ENCODE measurements at regions of chr6 and their contacts with region 1.

Region 1: DNA sequence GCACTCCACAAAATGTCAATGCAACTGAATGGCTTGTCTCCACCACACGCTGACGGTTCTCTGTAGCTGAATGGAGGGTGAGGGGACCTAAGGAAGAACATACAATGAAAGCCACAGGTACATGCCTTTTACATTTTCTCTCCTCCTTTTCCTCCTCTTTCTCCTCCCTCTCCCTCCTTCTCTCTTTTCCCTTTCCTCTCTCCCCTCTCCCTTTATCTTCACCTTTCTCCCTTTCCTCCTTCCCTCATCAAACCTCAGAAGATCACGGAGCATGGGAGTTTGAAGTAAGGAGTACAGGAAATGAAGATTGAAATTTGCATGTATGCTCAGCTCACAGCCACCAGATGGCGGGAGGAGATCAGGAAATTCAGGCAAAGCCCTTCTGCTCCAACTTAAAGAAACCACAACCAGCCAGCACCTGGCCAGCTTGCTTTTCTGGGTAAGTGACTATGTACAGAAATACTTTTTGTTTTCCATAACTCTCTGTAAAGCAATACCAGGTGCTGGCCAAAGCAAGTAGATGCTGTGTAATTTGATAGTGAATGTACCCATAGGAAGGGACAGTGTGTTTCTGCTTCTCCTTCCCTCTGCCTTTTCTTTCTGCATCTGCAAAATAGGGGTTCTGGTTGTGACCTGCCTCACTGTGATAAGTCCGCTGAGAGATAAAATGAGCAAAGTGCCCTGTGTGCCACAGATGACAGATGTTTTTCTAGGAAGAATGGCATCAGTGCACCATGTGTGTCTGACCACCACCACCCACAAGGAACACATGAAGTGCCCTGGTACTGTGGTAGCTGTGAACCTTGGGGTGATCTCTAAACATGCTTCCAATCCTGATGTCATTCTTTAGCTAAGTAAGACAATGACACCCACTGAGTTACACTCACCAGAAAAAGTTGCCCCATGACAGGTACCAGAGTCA is 18.6 kb upstream of the FOXO3 start:
- DNase-seq: no peak
- H3K4me3 ChIP-seq: no peak overlapping the region
- H3K27ac ChIP-seq: no peak overlapping the region
- H3K4me1 ChIP-seq: peaks cover 4 to 30% (median 23%) of the 10 kb centered on the region in 4 donors
- H3K27me3 ChIP-seq: no peaks in the 10 kb centered on the region
- CTCF ChIP-seq: peak; percentile 82 to 90 (median 89)
- EP300 ChIP-seq: no peak
- POLR2A ChIP-seq: no peak

Region 2: DNA sequence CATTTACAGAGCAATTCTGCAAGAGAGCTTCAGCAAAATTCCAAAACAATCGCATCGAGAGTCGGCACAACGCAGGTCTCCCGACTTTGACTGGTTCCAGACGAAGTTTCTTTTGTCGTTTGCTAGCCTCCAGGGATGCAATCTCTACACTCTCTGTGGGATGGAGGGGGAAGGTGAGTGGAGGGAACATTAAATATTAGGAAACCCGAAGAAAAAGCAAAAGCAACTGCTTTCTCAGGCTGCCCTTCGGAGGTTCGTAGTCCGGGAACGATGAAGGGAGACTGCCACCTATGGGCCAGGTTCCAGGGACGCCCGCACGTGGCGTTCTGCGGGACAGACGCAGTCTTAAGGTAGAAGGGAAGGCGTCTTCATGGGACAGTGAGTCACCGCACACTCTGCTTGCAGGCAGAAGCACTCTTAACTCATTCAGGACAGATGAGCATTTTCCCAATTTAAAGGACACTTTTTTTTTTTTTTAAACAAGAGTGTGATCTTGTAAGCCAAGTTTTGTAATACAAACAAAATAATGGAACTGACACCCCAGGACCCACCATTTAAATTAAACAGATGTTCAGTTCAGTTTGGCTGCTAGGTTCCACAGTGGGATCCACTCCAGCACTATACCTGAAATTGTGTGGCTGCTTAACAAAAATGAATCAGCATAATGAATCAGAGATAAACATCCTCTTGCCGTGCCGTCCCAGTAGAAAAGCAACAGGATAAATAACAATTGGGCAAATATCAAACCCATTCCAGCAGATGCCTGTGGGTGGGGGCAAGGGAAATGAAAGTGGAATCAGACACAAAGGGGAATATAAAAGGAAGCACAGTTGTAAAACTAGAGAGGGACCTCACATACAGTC is 240.3 kb after region 1 on chr6:
- intact Hi-C with region 1: loop called (anchors 2 kb)
- DNase-seq: peak; percentile 96
- H3K4me3 ChIP-seq: peak overlapping the region; percentile 42 to 55 (median 52)
- H3K27ac ChIP-seq: peak overlapping the region; percentile 8 to 70 (median 56)
- H3K4me1 ChIP-seq: peaks cover 6 to 21% (median 19%) of the 10 kb centered on the region in 4 donors
- H3K27me3 ChIP-seq: no peaks in the 10 kb centered on the region
- CTCF ChIP-seq: peak; percentile 69 to 78 (median 77)
- EP300 ChIP-seq: no peak
- POLR2A ChIP-seq: no peak

Region 3: DNA sequence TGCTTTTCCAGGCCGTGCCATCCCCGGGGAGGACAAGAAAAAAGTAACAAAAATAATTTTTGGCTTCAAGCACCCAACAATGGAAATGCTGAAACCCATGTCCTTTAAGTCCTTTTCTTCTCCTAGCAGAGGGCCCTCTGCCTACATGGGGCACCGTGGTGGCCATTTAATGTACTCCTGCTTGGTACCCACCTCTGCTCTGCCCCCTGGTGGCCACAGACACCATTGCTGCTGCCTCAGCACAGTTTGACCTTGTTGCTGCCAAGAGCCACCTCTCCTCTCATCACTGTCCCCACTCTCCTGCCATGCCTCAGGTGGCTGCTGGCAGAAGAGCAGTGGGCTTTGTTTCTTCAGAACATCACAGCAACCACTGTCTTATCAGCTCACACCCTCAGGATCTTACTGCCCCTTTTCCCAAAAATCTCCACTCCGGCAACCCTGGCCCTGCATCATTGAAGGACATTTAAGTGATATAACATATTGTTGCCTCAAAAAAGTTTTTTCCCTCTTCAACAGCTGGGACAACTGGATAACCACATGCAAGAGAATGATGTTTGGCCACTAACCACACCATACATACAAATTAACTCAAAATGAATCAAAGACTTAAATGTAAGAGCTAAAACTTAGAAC is 293.2 kb after region 1 on chr6:
- intact Hi-C with region 1: loop called (anchors 1 kb)
- DNase-seq: peak; percentile 95
- H3K4me3 ChIP-seq: no peak overlapping the region
- H3K27ac ChIP-seq: peak overlapping the region in 1 of 4 donors; percentile 21
- H3K4me1 ChIP-seq: peaks cover 0 to 13% (median 8%) of the 10 kb centered on the region in 4 donors
- H3K27me3 ChIP-seq: no peaks in the 10 kb centered on the region
- CTCF ChIP-seq: peak in 2 of 3 experiments; percentile 97
- EP300 ChIP-seq: no peak
- POLR2A ChIP-seq: no peak

Region 4: DNA sequence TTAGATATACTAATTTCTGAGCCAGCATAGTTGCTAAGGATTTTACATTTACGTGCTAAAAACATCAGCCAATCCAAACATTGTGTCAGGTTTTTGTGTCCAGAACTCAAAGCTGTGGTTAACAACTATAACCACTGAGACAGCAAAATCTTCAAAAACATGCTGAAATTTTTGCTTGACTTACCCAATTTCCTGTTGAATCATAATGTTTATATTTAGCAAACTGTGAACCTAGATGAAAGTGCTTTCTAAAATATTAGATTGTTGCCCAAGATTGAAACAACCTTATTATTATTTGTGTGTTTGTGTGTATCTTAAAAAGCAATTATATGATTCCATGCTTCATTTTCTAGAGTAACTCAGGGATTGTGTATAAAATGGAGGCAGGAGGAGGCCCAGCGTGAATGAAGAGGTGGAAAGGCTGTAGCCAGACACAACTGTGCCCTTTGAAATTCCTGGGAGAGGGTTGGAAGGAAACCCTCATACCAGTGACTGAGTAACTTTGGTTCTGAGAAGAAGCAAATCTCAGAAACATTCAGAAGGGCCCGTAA is 354.1 kb after region 1 on chr6:
- intact Hi-C with region 1: loop called (anchors 2 kb)
- DNase-seq: no peak
- H3K4me3 ChIP-seq: no peak overlapping the region
- H3K27ac ChIP-seq: peak overlapping the region; percentile 37 to 58 (median 52)
- H3K4me1 ChIP-seq: peaks cover 17 to 24% (median 21%) of the 10 kb centered on the region in 4 donors
- H3K27me3 ChIP-seq: no peaks in the 10 kb centered on the region
- CTCF ChIP-seq: no peak
- EP300 ChIP-seq: no peak
- POLR2A ChIP-seq: no peak

Measured in esophagus muscularis mucosa (tissue), 4 donors.